Sigmoid colon (tissue), 7 donors: ENCODE measurements at regions of chr3 and their contacts with region 1.

Region 1: DNA sequence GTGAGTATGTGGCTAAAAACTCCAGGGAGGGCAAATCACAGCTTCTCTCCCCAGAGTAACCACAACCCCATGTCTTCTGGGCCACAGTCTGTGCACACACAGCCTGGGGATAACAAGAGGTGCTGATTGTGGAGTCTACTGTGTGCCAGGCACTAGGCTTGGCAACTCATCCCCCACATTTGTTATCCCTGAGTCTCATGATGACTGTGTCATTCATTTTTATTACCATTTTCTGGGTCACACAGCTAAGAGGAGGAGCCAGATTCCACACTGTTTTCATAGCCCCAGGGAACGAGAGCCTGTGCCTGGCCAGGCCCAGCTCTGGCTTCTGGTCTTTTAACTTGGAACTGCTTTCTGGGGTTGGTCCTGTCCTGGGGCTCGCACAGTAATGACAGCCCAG is 34.5 kb downstream of the ESYT3 start:
- DNase-seq: peak; percentile 86
- H3K4me3 ChIP-seq: no peak overlapping the region
- H3K27ac ChIP-seq: peak overlapping the region in 3 of 4 donors; percentile 80 to 89 (median 87)
- H3K4me1 ChIP-seq: peaks cover 0 to 47% (median 33%) of the 10 kb centered on the region in 4 donors
- H3K27me3 ChIP-seq: no peaks in the 10 kb centered on the region
- CTCF ChIP-seq: no peak
- EP300 ChIP-seq: peak; percentile 61 to 87 (median 78)
- POLR2A ChIP-seq: no peak

Region 2: DNA sequence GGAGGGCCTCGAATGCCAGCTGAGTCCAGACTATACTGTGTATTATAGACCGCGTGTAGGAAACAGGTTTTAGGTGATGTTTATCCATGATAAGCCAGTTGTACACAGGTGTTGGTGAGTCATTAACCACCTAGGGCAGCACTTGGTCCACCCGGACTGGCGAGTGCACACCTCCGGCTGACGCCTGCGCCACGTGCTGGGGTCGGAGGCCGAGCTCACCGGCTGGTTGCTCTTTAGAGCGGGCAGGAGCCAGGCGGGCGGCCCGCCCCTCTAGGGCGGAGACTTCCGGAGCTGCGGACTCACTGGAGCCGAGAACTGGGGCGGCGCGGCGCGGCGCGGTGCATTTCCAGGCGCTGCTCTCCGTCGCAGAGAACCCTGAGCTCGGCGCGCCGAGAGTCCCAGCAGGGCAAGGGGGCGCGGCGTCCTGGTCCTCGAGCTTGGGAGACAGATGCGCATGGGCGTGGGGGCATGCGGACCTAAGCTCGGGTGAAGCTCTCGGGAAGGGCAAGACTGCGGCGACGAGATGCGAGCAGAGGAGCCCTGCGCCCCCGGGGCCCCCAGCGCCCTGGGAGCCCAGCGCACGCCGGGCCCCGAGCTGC is 34.5 kb before region 1 on chr3 and contains the start of gene ESYT3:
- intact Hi-C with region 1: loop called (anchors 2 kb)
- DNase-seq: peak; percentile 85
- H3K4me3 ChIP-seq: peak within 1 kb of the TSS; percentile 46 to 68 (median 63)
- H3K27ac ChIP-seq: peak within 1 kb of the TSS in 3 of 4 donors; percentile 68 to 78 (median 72)
- H3K4me1 ChIP-seq: peaks cover 0 to 29% (median 23%) of the 10 kb centered on the region in 4 donors
- H3K27me3 ChIP-seq: peaks cover 0 to 7% (median 0%) of the 10 kb centered on the region in 3 donors
- CTCF ChIP-seq: no peak
- EP300 ChIP-seq: no peak
- POLR2A ChIP-seq: peak in 1 of 2 donors; percentile 32
- total RNA-seq, gene ESYT3: 15.1 to 19.4 (median 17.2) TPM

Region 3: GRCh38 chr3:138493804-138494606 is 25.1 kb after region 1 on chr3:
- intact Hi-C with region 1: loop called (anchors 1 kb)
- DNase-seq: no peak
- H3K4me3 ChIP-seq: no peak overlapping the region
- H3K27ac ChIP-seq: peak overlapping the region in 3 of 4 donors; percentile 3 to 47 (median 9)
- H3K4me1 ChIP-seq: peaks cover 0 to 18% (median 12%) of the 10 kb centered on the region in 4 donors
- H3K27me3 ChIP-seq: no peaks in the 10 kb centered on the region
- CTCF ChIP-seq: no peak
- EP300 ChIP-seq: no peak
- POLR2A ChIP-seq: no peak

Region 4: DNA sequence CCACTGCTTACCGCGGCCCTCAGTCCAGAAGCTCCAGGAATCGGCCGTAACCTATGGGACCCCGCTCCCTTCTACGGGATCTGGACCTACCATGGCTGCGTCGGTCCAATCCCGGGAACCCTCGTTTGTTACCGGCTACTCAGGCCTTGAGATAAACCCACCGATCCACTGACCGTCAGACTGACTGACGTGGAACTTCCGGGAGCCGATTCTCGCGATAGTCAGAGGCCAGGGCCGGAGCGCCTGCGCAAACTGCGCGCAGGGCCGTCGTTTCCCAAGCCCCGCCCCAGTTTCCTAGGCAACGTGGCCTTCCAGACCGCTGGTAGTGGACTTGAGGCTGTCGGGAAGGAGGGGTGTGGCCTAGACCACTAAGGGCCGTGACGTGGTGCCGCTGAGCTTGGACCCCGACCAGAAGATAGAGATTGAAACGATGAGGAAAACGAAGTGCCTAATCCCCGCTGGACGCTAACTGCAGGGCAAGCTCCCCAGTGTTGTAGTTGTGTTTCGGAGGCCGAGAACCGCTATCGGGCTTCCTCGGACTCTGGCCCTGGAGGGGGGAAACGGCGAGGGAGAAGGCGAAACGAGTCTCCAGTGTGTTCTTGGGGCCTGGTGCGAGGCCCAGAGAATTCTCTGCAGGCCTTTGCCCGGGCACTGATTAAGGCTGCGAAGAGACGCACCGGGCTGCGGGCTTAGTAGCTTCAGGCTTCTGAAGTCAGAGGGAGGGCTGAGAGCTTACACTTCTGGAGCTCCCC is 920.7 kb after region 1 on chr3 and contains the start of gene COPB2:
- intact Hi-C with region 1: no loop called
- DNase-seq: peak; percentile 100
- H3K4me3 ChIP-seq: peak within 1 kb of the TSS; percentile 73 to 96 (median 90)
- H3K27ac ChIP-seq: peak within 1 kb of the TSS; percentile 94 to 96 (median 96)
- H3K4me1 ChIP-seq: peaks cover 0 to 43% (median 39%) of the 10 kb centered on the region in 4 donors
- H3K27me3 ChIP-seq: no peaks in the 10 kb centered on the region
- CTCF ChIP-seq: no peak
- EP300 ChIP-seq: peak in 1 of 4 donors; percentile 66
- POLR2A ChIP-seq: peak; percentile 73 to 80
- total RNA-seq, gene COPB2: 54.0 to 82.0 (median 68.7) TPM